Activated CD4-positive, alpha-beta T cell treated with anti-CD3 and anti-CD28 coated beads for 36 hours (primary cell): ENCODE measurements at regions of chr1 and their contacts with region 1.

Region 1: GRCh38 chr1:243416495-243416894 is 160.7 kb downstream of the SDCCAG8 start:
- DNase-seq: no peak
- ATAC-seq: peak; percentile 87
- H3K4me3 Mint-ChIP-seq: no peak overlapping the region
- H3K27ac Mint-ChIP-seq: peak overlapping the region; percentile 68
- H3K4me1 Mint-ChIP-seq: peaks cover 45% of the 10 kb centered on the region
- H3K27me3 Mint-ChIP-seq: no peaks in the 10 kb centered on the region

Region 2: DNA sequence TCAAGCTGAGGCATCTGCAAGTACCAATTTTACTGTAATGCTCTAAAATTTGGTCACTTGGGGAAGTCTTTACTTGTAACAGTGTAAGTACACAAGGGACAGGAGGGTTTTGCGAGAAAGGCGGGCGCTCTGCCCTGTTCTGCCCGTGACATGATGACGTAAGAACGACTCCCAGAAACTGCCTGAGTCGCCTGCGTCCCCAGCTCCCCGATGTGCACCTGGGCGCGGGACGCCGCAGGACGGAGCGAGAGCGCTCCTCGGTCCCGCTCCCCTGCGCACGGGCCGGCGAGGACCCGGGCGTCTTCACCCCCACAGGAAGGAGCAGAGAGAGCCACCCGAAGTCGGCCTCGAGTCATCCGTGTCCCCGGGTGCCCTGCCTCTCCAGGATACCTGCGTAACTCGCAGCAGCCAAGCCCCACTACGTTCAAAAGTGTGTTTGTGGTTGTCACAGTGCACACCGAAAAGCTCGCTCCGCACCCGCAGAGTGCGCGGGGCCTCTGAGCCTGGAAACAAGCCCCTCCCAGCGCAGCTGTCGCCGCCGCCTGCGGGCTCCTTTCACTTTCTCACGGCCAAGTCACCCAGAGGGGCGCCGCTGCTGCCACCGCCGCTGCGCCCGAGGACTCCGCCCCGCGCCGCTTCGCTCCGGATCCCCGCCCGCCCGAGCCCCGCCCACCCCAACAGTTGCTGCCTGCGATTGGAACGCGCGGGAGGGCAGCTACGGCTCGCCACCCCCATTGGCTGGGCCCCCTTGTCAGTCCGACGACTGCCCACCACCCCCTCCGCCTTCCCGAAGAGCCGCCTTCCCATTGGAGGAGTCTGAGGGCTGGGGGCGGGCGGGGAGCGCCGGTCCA is 631.4 kb after region 1 on chr1:
- CTCF ChIA-PET with region 1: no interaction called
- POLR2A ChIA-PET with region 1: no interaction called
- intact Hi-C with region 1: loop called in 1 of 2 experiments (anchors 5 kb)
- DNase-seq: peak; percentile 98
- ATAC-seq: peak; percentile 92
- H3K4me3 Mint-ChIP-seq: peak overlapping the region; percentile 93
- H3K27ac Mint-ChIP-seq: peak overlapping the region; percentile 97
- H3K4me1 Mint-ChIP-seq: peaks cover 35% of the 10 kb centered on the region
- H3K27me3 Mint-ChIP-seq: no peaks in the 10 kb centered on the region